ENCODE measurements at regions of chr11 and their contacts with region 1.

Region 1: GRCh38 chr11:75547580-75548058 is 14.4 kb upstream of the SERPINH1 start:
- DNase-seq: peak; percentile 65 to 78
- H3K4me3 ChIP-seq: no peak overlapping the region
- H3K27ac ChIP-seq: no peak overlapping the region
- H3K4me1 ChIP-seq: peaks cover 0 to 6% (median 3%) of the 10 kb centered on the region in 4 donors
- H3K27me3 ChIP-seq: no peaks in the 10 kb centered on the region
- CTCF ChIP-seq: peak; percentile 92 to 94

Region 2: GRCh38 chr11:75577207-75577606 is 29.6 kb after region 1 on chr11:
- intact Hi-C with region 1: loop called (anchors 2 kb)
- DNase-seq: no peak
- H3K4me3 ChIP-seq: no peak overlapping the region
- H3K27ac ChIP-seq: peak overlapping the region in 1 of 2 donors; percentile 37
- H3K4me1 ChIP-seq: peaks cover 0 to 21% (median 5%) of the 10 kb centered on the region in 4 donors
- H3K27me3 ChIP-seq: no peaks in the 10 kb centered on the region
- CTCF ChIP-seq: peak in 1 of 2 experiments; percentile 56

Region 3: GRCh38 chr11:75667831-75668450 is 120.3 kb after region 1 on chr11:
- intact Hi-C with region 1: loop called (anchors 10 kb)
- DNase-seq: no peak
- H3K4me3 ChIP-seq: peak overlapping the region; percentile 59 to 68
- H3K27ac ChIP-seq: peak overlapping the region; percentile 60 to 62
- H3K4me1 ChIP-seq: peaks cover 0 to 19% (median 15%) of the 10 kb centered on the region in 4 donors
- H3K27me3 ChIP-seq: no peaks in the 10 kb centered on the region
- CTCF ChIP-seq: no peak

Measured in tibial artery (tissue), 4 donors.